ENCODE measurements at regions of chr17 and their contacts with region 1.

Region 1: DNA sequence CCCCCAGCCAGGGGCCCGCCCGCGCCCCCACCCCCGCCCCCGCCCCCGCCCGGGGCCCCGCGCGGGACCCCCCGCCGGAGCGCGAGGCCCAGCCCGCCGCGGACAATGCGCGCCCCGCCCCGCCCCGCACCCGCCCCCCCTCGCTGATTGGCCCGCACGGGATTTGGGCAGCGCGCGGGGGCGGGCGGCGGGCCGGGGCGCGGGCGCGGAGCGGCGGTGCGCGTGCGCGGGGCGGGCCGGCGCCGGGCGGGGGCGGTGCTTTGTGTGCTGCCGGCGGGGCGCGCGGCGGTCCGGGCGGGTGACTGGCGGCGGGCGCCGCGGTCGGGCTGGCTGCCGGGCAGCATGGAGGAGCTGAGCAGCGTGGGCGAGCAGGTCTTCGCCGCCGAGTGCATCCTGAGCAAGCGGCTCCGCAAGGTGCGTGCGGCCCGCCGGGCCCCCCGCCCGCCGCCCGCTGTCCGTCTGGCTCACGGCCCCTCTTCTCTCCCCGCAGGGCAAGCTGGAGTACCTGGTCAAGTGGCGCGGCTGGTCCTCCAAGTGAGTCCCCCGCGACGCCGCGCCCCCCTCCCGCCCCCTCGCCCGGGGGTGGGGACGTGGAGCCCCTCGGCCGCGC is at the start of gene CBX2:
- DNase-seq: peak; percentile 84
- ATAC-seq: peak; percentile 86
- H3K4me3 Mint-ChIP-seq: peak within 1 kb of the TSS; percentile 91
- H3K27ac Mint-ChIP-seq: peak within 1 kb of the TSS; percentile 65
- H3K4me1 Mint-ChIP-seq: peaks cover 54% of the 10 kb centered on the region
- H3K27me3 Mint-ChIP-seq: peaks cover 38% of the 10 kb centered on the region
- total RNA-seq, gene CBX2: 16.2 to 16.5 TPM

Region 2: DNA sequence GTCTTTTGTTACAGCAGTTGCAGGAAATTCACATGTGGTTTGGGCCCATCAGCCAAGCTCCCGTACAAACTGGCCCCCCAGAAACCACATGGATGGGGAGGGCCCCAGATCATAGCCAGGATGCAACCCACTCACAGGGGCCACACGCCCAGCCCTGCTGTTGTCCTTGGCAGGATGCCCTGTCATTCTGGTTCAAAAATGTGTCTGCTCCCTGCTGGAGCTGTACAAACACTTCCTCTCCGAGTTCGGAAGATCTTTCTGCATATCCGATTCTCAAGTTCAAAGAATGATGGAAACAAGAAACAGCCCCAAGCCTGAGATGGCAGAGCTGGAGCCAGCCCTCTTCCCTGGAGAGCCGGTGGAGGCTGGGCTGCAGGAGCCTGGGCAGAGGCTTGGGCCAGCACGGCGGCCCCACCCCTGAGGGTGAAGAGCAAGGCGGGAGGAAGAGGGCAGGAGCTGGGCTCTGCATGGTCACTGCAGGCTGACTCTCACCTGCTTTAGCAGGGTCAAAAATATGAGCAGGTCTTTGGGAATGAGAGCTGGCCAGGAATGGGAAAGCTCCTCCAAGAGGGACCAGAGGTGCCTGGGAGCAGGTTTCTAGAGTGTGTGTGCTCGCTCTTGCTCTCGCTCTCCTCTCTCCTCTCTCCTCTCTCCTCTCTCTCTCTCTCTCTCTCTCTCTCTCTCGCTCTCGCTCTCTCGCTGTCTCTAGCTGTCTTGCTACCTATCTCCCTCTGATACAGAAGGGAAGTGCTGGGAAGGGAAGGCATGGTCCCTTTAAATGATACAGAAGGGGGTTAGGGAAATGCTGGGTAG is 82.0 kb before region 1 on chr17:
- CTCF ChIA-PET with region 1: no interaction called
- POLR2A ChIA-PET with region 1: no interaction called
- DNase-seq: no peak
- ATAC-seq: no peak
- H3K4me3 Mint-ChIP-seq: no peak overlapping the region
- H3K27ac Mint-ChIP-seq: no peak overlapping the region
- H3K4me1 Mint-ChIP-seq: no peaks in the 10 kb centered on the region
- H3K27me3 Mint-ChIP-seq: peaks cover 7% of the 10 kb centered on the region

Region 3: GRCh38 chr17:79789534-79790353 is 11.7 kb after region 1 on chr17:
- CTCF ChIA-PET with region 1: interaction called, 10 read pairs
- POLR2A ChIA-PET with region 1: interaction called, 3 read pairs
- DNase-seq: no peak
- ATAC-seq: peak; percentile 50
- H3K4me3 Mint-ChIP-seq: no peak overlapping the region
- H3K27ac Mint-ChIP-seq: no peak overlapping the region
- H3K4me1 Mint-ChIP-seq: peaks cover 13% of the 10 kb centered on the region
- H3K27me3 Mint-ChIP-seq: peaks cover 50% of the 10 kb centered on the region